GM10248 (cell line): ENCODE measurements at regions of chr20 and their contacts with region 1.

Region 1: GRCh38 chr20:40990542-40991120 is 38.0 kb upstream of the TOP1 start:
- DNase-seq: peak; percentile 81
- CTCF ChIP-seq: peak; percentile 93

Region 2: DNA sequence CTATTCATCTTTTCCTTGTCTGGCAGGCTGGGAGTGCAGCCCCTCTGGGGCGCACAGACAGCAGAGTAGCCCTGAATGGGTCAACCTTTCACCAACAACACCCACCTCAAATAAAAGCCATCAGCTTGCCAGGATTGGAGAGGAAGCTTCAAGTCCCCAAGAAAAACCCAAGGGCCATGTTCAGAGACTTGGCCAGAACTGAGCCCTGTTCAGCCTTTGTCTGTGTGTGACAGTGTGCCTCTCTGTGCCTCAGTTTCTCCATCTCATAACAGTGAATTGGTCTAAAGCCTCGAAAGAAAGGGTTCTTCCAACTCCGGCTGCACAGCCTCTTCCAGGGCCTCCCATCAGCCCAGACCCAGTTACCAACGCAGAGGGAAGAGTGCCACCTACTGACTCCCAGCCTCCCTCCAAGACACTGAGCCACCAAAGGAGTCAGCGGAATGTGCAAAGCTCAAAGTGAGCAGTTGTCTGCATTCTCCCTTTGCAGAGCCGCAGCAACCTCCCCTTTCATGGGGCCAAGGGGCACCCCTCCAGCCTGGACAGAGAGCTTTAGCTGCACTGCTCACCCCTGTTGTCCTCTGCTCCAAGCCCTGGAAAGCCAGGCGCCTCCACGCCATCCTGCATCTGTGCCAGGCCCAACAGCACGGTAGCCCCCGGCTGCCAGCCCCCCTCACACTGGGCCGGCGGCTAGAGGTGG is 44.7 kb before region 1 on chr20:
- CTCF ChIA-PET with region 1: no interaction called
- POLR2A ChIA-PET with region 1: no interaction called
- DNase-seq: peak; percentile 57
- CTCF ChIP-seq: peak; percentile 47

Region 3: GRCh38 chr20:40962730-40963504 is 27.7 kb before region 1 on chr20:
- CTCF ChIA-PET with region 1: interaction called, 196 read pairs
- POLR2A ChIA-PET with region 1: no interaction called
- DNase-seq: peak; percentile 82
- CTCF ChIP-seq: peak; percentile 91

Region 4: DNA sequence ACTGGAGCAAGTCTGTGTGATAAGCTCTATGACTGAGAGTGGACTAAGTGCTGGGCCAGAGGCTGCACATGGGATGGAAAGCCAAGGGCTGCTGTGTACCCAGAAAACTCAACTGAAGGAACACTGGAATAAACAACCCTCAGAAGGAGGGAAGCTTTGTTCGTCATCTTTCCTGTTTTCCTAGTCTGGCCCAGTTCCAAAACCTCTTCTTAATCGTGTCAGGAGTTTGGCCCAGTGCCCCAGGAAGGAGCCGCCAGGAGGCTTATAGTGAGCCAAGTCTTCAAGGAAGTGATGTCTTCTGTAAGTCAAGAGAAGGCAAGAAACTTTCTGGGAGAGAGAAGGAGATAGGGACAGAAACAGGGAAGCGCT is 14.7 kb after region 1 on chr20:
- CTCF ChIA-PET with region 1: interaction called, 153 read pairs
- POLR2A ChIA-PET with region 1: no interaction called
- DNase-seq: no peak
- CTCF ChIP-seq: no peak

Region 5: DNA sequence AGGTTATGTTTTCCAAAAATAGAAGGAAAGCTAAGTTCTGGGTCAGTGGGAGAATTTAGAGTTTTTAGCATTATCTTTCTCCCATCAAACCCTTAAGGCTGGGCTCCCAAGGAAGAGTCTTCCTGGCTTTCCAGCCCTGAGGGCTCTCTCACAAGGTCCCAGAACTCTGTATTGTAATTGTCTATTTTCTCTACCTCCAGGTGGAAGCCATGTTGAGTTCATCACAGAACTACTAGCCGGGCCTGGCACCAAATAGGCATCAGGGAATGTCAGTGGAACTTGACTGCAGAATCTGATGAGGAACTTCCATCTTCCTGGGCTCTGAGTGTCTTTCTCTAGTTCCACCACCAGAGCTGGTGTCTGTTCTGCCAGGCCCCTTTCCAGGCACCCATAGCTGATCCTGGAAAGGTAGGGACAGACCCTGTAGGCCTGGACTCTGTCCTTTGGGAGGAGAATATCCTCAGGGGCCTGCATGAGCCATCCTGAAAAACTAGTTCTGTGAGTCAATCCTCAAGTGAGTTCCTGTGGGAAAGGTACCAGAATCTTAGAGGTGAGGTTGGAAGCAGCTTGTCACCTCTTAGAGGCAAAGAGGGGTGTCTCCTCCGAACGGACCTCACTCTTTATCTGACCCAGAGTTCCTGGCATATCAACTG is 26.9 kb after region 1 on chr20:
- CTCF ChIA-PET with region 1: interaction called, 153 read pairs
- POLR2A ChIA-PET with region 1: interaction called, 12 read pairs
- DNase-seq: no peak
- CTCF ChIP-seq: no peak

Region 6: GRCh38 chr20:41047975-41048305 is 57.3 kb after region 1 on chr20:
- CTCF ChIA-PET with region 1: interaction called, 24 read pairs
- POLR2A ChIA-PET with region 1: interaction called, 4 read pairs
- DNase-seq: peak; percentile 35
- CTCF ChIP-seq: no peak

Region 7: GRCh38 chr20:41072190-41072863 is 81.7 kb after region 1 on chr20:
- CTCF ChIA-PET with region 1: interaction called, 24 read pairs
- POLR2A ChIA-PET with region 1: no interaction called
- DNase-seq: no peak
- CTCF ChIP-seq: no peak

Region 8: DNA sequence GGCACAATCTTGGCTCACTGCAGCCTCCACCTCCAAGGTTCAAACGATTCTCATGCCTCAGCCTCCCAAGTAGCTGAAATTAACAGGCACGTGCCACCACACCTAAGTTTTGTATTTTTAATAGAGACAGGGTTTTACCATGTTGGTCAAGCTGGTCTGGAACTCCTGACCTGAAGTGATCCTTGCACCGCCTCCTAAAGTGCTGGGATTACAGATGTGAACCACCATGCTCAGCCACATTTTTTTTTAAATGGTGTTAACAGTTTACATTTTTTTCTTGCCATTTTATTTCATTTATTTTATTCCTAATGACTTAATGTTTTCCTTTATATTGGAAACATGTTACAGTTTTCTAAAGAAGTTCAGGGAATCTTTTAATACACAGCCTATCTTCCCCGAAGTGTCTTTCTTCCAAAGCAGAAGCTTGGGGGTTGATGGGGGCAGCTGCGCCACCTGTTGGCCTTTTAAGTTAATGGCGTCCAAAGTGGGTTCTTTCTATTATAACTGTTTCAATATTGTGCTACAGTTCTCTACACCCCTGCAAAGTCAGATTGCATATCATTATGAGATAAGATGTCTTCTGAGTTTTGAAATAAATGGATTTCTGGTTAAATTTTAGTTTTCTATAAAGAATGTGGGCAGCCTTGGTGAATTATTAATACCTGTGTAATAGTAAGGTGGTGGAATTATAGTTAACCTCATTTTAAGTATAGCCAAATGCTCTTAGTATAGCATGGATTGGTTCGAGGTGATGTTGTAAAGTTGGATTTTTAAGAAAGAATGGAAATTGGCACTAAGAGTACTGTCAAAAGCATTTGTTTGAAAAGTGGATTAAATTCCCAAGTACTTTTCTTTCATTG is 104.7 kb after region 1 on chr20:
- CTCF ChIA-PET with region 1: interaction called, 63 read pairs
- POLR2A ChIA-PET with region 1: interaction called, 3 read pairs
- DNase-seq: peak; percentile 53
- CTCF ChIP-seq: peak; percentile 73

Region 9: DNA sequence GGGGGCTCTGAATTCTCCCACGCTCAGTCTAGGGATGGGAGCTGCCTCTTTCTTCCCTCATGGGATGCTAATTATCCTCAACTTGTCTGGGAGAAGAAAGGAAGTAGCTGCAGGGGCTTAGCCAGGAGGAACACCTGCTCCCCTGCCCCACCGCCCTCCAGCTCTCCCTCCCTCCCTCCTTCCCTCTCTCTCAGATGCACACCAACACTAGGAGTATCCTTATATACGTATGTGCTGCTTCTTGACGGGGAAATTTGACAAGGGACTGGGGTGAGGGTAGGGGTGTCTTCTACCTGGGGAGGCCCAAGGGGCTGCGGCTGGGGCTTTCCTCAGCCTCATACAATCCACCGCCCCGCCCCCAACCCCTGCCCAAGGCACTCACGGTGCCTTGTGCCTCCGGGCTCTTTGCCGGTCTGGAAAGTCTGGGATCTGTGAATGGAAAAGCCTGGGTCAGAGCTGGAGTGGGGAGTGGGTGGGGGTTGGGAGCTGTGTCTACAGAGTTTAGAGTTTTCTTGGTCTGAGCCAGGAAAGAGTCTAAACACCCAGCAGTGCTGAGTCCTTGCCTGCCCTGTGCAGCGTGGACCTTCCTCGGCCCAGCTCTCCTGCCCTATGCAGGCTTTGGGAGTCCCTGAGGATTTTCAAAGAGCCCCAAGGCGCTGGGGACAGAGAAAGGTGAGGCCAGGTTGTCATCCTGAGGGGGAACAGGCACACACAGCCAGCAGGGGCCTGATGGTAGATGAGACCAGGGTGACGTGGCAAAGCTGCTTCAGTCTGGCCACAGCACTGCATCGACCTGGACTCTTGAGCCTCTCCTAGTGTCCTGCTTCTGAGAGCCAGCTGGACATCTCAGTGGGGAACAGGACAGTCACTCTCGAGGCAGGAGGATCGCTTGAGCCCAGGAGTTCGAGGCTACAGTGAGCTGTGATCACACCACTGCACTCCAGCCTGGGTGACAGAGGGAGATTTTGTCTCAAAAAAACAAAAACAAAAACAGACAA is 405.3 kb after region 1 on chr20:
- CTCF ChIA-PET with region 1: no interaction called
- POLR2A ChIA-PET with region 1: no interaction called
- DNase-seq: no peak
- CTCF ChIP-seq: no peak

Region 10: DNA sequence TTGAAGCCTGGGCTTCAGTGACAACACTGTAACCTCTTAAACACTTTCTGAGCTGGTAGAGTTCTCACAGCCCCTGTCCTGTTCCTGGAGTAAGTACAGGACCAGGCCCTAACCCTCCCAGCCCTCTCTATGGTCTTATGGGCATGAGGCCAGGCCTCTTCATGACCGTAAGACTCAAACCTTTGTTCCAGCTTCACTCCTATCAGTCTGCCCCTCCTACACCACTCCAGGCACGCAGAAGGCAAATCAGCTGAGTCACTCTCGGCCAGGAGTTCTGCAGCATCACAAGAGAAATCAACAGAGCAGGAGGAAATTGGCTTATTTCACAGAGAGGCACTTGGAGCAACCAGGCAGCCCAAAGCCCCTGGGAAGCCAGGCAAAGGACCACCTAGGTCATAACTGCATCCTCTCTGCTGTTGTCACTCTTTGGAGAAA is 652.9 kb after region 1 on chr20:
- CTCF ChIA-PET with region 1: no interaction called
- POLR2A ChIA-PET with region 1: no interaction called
- DNase-seq: no peak
- CTCF ChIP-seq: no peak